ENCODE measurements at regions of chr22 and their contacts with region 1.

Region 1: DNA sequence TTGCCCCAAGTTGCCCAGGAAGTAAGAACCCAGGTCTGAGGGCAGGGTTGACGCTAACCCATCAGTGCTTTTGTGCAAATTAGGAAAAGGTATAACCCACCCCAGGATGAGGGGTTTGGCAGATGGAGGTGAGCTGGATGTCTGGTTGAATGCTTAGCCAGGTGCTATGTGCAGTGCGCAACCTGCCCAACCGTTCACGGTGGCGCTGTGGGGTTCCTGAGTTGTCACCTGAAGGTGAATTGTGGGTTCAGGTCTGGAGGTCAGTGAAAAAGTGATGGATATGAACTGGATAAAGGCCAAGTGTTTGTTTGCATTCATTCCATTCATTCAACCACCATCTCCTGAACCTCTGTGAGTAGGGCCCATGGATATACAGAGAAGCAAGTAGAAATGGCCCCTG is 14.3 kb upstream of the LGALS2 start:
- DNase-seq: no peak
- ATAC-seq: no peak
- H3K4me3 ChIP-seq: no peak overlapping the region
- H3K27ac ChIP-seq: no peak overlapping the region
- H3K4me1 ChIP-seq: peaks cover 10% of the 10 kb centered on the region
- CTCF ChIP-seq: no peak
- EP300 ChIP-seq: no peak
- POLR2A ChIP-seq: no peak
- RAD21 ChIP-seq: no peak

Region 2: DNA sequence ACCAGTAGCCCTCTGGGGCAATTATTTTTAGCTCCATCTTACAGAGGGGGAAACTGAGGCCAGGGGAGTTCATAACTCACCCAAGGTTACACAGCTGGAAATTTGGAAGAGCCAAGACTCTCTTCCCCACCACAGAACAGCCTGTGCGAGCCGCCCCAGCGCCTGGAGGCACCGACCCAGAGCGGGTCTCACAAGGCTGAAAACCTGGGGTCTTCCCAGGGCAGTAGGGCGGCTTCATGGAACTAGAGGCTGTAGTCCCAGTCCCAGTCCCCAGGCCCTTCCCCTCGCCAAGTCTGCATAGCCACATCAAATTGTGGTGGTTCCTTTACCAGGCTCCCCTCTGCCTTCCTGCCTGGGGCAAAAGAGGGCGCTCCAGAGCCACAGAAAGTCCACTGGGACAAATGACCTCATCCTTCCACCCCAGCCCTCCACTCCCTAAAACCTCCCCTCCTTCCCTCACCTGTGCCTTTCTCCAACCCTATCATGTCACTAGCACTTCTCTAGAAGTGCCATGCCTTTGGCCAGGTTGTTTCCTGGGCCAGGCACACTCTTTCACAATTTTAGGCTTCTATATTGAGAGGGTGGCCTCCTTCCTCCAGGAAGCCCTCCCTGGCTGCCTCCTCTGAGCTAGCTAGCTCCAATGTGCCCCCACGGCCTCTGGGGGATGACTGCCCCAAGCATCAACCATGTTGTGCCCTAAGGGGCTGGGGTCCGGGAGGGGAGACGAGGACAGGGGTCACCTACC is 49.1 kb before region 1 on chr22:
- CTCF ChIA-PET with region 1: interaction called, 101 read pairs
- POLR2A ChIA-PET with region 1: interaction called, 3 read pairs
- DNase-seq: peak; percentile 62 to 73
- ATAC-seq: peak; percentile 73 to 82
- H3K4me3 ChIP-seq: peak overlapping the region; percentile 36
- H3K27ac ChIP-seq: peak overlapping the region; percentile 80 to 96
- H3K4me1 ChIP-seq: peaks cover 50% of the 10 kb centered on the region
- CTCF ChIP-seq: peak; percentile 77
- EP300 ChIP-seq: no peak
- POLR2A ChIP-seq: no peak
- RAD21 ChIP-seq: peak; percentile 87 to 89

Region 3: DNA sequence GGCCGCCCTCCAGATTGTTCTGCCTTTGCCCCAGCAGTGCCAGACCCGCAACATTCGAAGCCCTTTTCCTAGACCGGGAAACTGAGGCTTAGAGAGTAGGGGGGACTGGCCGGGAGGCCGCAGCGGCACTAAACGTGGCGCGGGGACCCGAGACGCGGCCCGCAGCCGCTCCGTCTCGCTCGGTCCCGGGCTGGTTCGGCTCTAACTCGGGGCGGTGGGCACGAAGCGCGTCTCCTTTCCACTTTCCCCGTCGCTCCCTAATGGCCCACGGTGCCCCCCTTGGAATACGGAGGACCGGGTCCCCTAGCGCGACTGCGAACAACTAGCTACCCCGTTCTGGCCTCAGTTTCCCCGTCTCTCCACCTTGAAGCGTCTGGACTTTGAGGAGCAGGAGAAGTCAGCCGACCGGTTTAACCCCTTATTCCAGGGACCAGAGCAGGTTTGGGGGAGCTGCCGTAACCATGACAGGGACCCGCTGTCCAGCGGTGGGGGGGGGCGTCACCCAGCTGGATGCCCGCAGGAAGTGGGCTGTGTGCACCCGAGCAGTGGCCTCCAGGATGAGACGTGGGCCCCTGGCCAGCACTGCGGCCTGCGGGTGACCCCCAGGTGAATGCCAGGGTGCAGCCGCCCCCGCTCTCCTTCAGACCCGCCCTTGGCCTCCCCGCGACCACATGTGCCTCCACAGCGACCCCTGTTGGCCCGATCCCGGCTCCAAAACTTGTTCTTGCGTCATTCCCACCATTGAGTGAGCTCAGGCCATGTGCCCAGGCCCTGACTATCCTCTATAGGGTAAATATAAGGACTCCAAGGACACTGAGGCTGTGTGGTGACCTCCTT is 32.8 kb before region 1 on chr22:
- CTCF ChIA-PET with region 1: interaction called, 69 read pairs
- POLR2A ChIA-PET with region 1: interaction called, 8 read pairs
- DNase-seq: peak; percentile 74 to 85
- ATAC-seq: peak; percentile 57 to 71
- H3K4me3 ChIP-seq: peak overlapping the region; percentile 98
- H3K27ac ChIP-seq: peak overlapping the region; percentile 100
- H3K4me1 ChIP-seq: peaks cover 58% of the 10 kb centered on the region
- CTCF ChIP-seq: peak; percentile 62
- EP300 ChIP-seq: no peak
- POLR2A ChIP-seq: no peak
- RAD21 ChIP-seq: peak; percentile 32 to 44; a peak in 3 of 5 replicates

Region 4: GRCh38 chr22:37575490-37576003 is 18.7 kb before region 1 on chr22:
- CTCF ChIA-PET with region 1: interaction called, 19 read pairs
- POLR2A ChIA-PET with region 1: interaction called, 8 read pairs
- DNase-seq: no peak
- ATAC-seq: no peak
- H3K4me3 ChIP-seq: no peak overlapping the region
- H3K27ac ChIP-seq: no peak overlapping the region
- H3K4me1 ChIP-seq: peaks cover 13% of the 10 kb centered on the region
- CTCF ChIP-seq: no peak
- EP300 ChIP-seq: no peak
- POLR2A ChIP-seq: no peak
- RAD21 ChIP-seq: no peak

Region 5: DNA sequence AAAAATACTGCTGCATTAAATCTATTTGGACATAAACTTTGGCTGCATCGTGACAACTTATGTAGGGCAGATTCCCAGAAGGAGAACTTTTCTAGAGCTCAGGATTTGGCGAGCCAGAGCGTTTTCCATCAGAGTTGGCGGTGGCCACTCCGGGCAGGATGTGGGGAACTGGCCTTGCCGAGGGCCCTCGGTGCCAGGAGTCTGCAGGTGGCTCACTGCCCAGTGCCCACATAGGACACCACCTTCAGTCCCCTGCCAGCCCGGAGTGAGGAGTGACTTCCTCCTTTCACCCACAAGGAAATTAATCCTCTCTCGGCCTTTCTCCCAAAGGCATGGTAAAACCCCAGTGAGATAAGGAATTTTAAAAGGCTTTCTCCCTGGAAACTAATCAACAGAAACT is 12.7 kb before region 1 on chr22:
- CTCF ChIA-PET with region 1: interaction called, 19 read pairs
- POLR2A ChIA-PET with region 1: interaction called, 8 read pairs
- DNase-seq: no peak
- ATAC-seq: no peak
- H3K4me3 ChIP-seq: no peak overlapping the region
- H3K27ac ChIP-seq: no peak overlapping the region
- H3K4me1 ChIP-seq: peaks cover 7% of the 10 kb centered on the region; the same call in 2 of the 3 replicates
- CTCF ChIP-seq: no peak
- EP300 ChIP-seq: no peak
- POLR2A ChIP-seq: no peak
- RAD21 ChIP-seq: no peak

Measured in A549 (cell line).